GM18951 (cell line): ENCODE measurements at regions of chr6 and their contacts with region 1.

Region 1: DNA sequence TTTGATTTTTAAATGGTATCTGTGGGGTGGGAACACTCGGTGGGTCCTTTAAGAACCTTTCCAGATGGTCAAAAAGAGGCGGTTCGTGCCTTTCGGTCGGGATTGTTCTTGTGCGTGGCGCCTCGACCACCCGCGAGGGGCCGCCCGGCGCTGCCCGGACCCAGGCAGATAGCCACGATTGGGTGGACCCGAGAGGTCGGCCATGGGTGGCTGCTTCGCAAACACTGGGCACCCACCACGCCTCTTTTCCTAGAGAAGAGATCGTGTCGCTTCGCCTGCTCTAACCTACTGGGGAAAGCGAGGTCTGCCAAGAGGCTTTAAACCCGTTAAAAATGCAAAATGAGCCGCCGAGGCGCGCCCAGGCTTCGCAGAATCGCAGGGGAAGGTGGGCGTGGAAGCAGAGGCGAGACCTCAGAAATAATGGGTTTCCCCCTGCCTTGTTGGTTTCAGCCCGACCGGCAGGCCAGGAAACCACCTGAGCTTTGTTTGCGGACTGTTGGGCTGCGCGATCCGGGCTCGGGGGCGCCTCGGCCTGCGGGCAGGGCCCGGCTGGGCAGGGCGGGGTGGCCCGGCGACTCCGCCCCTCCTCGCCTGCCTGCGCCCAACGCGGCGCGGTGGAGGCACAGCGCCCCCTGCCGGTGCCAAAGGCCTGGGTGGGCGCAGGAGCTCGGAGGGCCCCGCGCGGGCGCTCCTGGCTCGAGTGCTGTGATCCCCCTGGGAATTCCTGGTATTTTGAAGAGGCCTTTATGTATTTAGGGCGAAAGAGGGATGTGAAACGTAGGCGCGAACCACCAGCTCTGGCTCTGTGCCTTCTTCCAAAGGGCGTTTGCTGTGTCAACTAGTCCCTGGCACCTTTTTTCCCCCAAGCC is 1.6 kb downstream of the MARCKS start:
- POLR2A ChIP-seq: peak; percentile 88

Region 2: GRCh38 chr6:113632220-113632864 is 226.4 kb before region 1 on chr6:
- in situ Hi-C with region 1: loop called (anchors 25 kb)
- POLR2A ChIP-seq: peak; percentile 55

Region 3: DNA sequence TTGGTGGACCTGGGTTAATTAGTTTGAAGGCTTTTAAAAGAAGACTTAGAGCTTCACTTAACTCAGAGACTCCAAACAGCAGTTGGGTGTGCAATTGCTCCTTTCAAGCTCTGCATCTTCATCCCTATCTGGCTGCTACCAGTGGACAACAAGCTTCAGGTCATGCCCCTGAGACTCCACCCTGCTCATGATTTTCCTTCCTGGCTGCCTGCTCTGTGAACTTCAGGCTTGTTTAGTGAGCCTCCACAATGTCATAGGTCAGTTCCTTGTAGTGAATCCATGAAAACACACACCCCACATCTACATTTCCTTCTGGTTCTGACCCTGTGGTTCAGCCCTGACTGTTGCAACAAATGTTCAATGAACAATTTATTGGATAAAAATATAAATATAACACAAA is 62.7 kb before region 1 on chr6:
- in situ Hi-C with region 1: no loop called
- POLR2A ChIP-seq: no peak

Region 4: GRCh38 chr6:114020196-114020595 is 161.5 kb after region 1 on chr6:
- in situ Hi-C with region 1: no loop called
- POLR2A ChIP-seq: no peak